ENCODE measurements at regions of chr1 and their contacts with region 1.

Region 1: DNA sequence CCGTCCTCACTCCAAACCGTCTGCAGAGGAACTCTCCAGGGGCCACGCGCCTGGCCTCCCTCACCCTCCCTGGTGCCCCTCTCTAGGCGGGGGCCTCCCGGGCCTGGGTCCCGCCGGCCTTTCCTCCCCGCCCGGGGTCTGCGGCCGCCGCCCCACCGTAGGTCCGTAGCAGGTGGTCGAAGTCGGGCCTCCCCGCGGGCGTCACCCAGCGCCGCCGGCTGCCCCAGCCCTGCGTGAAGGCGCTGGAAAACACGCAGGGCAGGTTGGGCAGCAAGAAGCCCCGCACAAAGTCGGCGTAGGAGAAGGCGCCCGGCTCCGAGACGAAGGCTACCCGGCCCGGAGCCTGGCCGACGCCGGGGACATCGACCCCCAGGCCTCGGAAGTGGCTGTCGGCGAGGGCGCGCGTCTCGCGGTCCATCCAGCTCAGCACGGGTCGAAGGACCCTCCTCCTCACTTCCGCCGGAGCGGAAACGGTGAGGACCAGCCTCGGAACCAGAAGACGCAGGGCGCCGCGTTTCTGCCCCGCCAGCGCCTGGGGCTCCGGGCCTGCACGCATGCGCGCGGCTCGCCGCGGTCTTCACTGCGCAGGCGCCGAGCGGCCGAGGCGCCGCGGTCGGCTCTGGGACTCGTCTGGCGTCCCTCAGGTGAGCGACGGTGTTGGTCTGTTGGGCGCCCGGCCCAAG is at the starts of genes JMJD4 and SNAP47:
- DNase-seq: peak; percentile 92 to 94 (median 93)
- ATAC-seq: peak; percentile 87 to 92 (median 90)
- H3K4me3 ChIP-seq: peak within 1 kb of the TSS; percentile 76 to 98 (median 96)
- H3K27ac ChIP-seq: peak within 1 kb of the TSS; percentile 72 to 82 (median 73)
- H3K4me1 ChIP-seq: peaks cover 0 to 30% (median 13%) of the 10 kb centered on the region in 4 donors
- H3K27me3 ChIP-seq: no peaks in the 10 kb centered on the region
- CTCF ChIP-seq: no peak
- POLR2A ChIP-seq: peak; percentile 85
- total RNA-seq, gene JMJD4: 7.2 to 17.7 (median 9.5) TPM
- total RNA-seq, gene SNAP47: 15.2 to 32.5 (median 24.8) TPM

Region 2: GRCh38 chr1:227563324-227564201 is 171.4 kb before region 1 on chr1 and contains the start of gene ZNF678:
- intact Hi-C with region 1: loop called in 1 of 2 experiments (anchors 5 kb)
- DNase-seq: peak; percentile 90
- ATAC-seq: peak; percentile 96 to 98 (median 96)
- H3K4me3 ChIP-seq: peak within 1 kb of the TSS; percentile 54 to 70 (median 68)
- H3K27ac ChIP-seq: peak within 1 kb of the TSS; percentile 49 to 80 (median 69)
- H3K4me1 ChIP-seq: no peaks in the 10 kb centered on the region
- H3K27me3 ChIP-seq: no peaks in the 10 kb centered on the region
- CTCF ChIP-seq: no peak
- POLR2A ChIP-seq: peak; percentile 60
- total RNA-seq, gene ZNF678: 2.4 to 4.8 (median 3.0) TPM

Region 3: GRCh38 chr1:227869851-227870305 is 134.9 kb after region 1 on chr1:
- intact Hi-C with region 1: no loop called
- DNase-seq: no peak
- ATAC-seq: no peak
- H3K4me3 ChIP-seq: no peak overlapping the region
- H3K27ac ChIP-seq: no peak overlapping the region
- H3K4me1 ChIP-seq: no peaks in the 10 kb centered on the region
- H3K27me3 ChIP-seq: no peaks in the 10 kb centered on the region
- CTCF ChIP-seq: no peak
- POLR2A ChIP-seq: no peak